HepG2 (cell line): ENCODE measurements at regions of chr10 and their contacts with region 1.

Region 1: DNA sequence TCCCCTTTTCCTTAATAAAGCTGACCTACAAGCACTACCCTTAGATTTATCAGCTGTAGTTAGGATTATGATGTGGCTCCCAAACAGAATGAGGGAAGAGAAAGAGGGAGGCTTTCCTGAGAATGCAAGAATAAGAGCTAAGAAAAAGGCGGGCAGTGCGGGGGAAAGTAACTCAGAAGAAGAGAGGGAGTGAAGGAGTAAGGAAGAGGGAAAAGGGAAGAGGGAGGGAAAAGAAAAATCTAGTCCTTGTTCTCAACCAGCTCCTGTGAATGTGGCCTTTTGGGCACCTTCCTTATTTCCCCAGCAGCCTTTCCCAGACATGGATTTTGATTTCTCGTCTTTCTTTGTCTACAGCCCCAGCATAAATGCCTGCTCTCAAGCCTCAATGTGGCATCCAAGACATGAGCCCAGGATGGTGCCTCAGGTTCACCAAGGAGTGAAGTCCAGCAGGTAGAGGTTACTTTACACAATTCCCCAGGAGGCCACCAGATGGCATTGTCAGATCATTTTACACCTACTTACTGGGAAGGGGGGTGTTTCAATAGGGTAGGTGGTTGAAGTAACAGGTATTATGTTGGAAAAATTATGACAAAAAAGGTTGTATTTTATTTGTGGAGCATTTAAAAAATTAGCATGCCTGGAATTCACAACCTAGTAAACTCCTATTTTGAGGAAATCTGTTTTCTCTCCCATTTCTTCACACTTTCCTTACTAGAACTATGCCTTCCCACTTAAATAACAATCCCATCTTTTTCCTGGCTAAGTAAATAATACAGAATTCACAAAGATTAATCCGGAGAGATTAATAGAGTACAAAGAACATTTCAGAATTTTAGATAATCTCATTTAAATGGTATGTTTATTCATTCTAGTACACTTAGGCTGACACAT is 106.5 kb downstream of the HTR7 start:
- DNase-seq: peak; percentile 49
- ATAC-seq: peak; percentile 96
- H3K4me3 ChIP-seq: no peak overlapping the region
- H3K27ac ChIP-seq: no peak overlapping the region
- H3K4me1 ChIP-seq: no peaks in the 10 kb centered on the region
- H3K27me3 ChIP-seq: no peaks in the 10 kb centered on the region; a peak in 1 of 5 replicates
- CTCF ChIP-seq: peak; percentile 83
- EP300 ChIP-seq: no peak
- POLR2A ChIP-seq: no peak
- RAD21 ChIP-seq: peak; percentile 59

Region 2: DNA sequence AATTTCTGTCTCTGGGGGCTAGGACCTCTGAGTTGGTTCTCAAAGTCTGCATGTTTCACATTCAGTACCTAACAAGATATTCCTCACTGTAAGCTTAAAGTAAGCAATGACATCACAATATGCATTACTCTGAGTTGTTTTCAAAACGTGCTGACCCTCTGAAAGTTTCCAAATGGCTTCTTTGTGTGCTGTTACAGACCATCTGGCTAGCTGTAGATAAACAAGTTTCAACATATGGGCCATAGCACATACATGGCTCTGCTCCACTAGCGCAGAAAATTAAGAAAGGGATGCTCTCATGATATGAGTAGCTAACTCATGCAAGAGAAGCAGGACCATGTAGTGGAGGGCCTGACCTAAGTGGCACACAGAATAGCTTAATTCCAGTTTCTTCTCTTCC is 12.5 kb before region 1 on chr10:
- CTCF ChIA-PET with region 1: no interaction called
- POLR2A ChIA-PET with region 1: no interaction called
- in situ Hi-C with region 1: no loop called
- intact Hi-C with region 1: no loop called
- DNase-seq: no peak
- ATAC-seq: no peak
- H3K4me3 ChIP-seq: no peak overlapping the region
- H3K27ac ChIP-seq: no peak overlapping the region
- H3K4me1 ChIP-seq: no peaks in the 10 kb centered on the region
- H3K27me3 ChIP-seq: no peaks in the 10 kb centered on the region
- CTCF ChIP-seq: no peak
- EP300 ChIP-seq: no peak
- POLR2A ChIP-seq: no peak
- RAD21 ChIP-seq: no peak

Region 3: DNA sequence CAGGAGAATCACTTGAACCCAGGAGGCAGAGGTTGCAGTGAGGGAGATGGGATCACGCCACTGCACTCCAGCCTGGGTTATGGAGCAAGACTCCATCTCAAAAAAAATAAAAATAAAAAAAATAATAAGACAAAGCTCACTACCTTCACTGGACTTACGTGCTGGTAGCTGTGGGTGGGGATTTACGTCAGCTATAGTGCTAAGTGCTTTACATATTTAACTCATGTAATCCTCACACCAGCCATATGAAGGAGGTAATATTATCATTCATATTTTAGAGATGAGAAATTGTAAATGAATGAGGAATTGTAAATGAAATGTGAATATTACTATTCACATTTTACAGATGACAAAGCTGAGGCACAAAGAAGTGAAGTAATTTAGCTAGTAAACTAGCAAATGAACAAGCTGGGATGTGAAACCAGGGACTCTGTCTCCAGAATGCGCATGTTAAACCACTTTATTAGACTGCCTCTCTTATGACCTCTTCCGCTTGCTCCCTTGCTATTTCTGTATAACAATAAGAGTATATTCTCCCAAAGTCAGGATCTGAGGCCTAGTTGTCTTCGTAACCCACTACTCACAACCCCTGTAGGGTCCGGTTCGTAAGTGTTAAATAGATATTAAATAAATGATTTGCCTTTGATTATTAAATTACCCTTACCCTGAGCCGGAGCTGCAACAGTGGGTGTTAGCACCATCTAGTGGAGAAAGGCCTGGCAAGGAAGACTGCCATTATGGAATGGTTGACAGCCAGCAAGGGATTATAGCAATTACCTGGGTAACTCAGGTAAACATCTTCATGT is 36.2 kb after region 1 on chr10:
- CTCF ChIA-PET with region 1: interaction called, 9 read pairs
- POLR2A ChIA-PET with region 1: no interaction called
- in situ Hi-C with region 1: no loop called
- intact Hi-C with region 1: loop called (anchors 1 kb)
- DNase-seq: peak; percentile 9
- ATAC-seq: peak; percentile 78
- H3K4me3 ChIP-seq: no peak overlapping the region
- H3K27ac ChIP-seq: no peak overlapping the region
- H3K4me1 ChIP-seq: no peaks in the 10 kb centered on the region
- H3K27me3 ChIP-seq: peaks cover 0 to 9% of the 10 kb centered on the region in 2 experiments; a peak in 3 of 5 replicates
- CTCF ChIP-seq: peak; percentile 65
- EP300 ChIP-seq: no peak
- POLR2A ChIP-seq: no peak
- RAD21 ChIP-seq: no peak

Region 4: GRCh38 chr10:90862908-90863514 is 111.7 kb after region 1 on chr10:
- CTCF ChIA-PET with region 1: interaction called, 24 read pairs
- POLR2A ChIA-PET with region 1: no interaction called
- in situ Hi-C with region 1: loop called (anchors 5 kb)
- intact Hi-C with region 1: loop called (anchors 1 kb)
- DNase-seq: peak; percentile 16
- ATAC-seq: no peak
- H3K4me3 ChIP-seq: no peak overlapping the region
- H3K27ac ChIP-seq: no peak overlapping the region
- H3K4me1 ChIP-seq: peaks cover 6% of the 10 kb centered on the region; the same call in 1 of the 2 replicates
- H3K27me3 ChIP-seq: peaks cover 2 to 29% of the 10 kb centered on the region in 2 experiments; a peak in 3 of 5 replicates
- CTCF ChIP-seq: peak; percentile 48
- EP300 ChIP-seq: no peak
- POLR2A ChIP-seq: no peak
- RAD21 ChIP-seq: no peak; the same call in 1 of the 2 replicates

Region 5: GRCh38 chr10:90871766-90872647 is 120.7 kb after region 1 on chr10 and contains the start of gene RPP30:
- CTCF ChIA-PET with region 1: interaction called, 5 read pairs
- POLR2A ChIA-PET with region 1: no interaction called
- in situ Hi-C with region 1: loop called (anchors 5 kb)
- intact Hi-C with region 1: loop called (anchors 2 kb)
- DNase-seq: peak; percentile 75
- ATAC-seq: peak; percentile 100
- H3K4me3 ChIP-seq: peak within 1 kb of the TSS; percentile 86 to 93 (median 86)
- H3K27ac ChIP-seq: peak within 1 kb of the TSS; percentile 64
- H3K4me1 ChIP-seq: peaks cover 28% of the 10 kb centered on the region
- H3K27me3 ChIP-seq: no peaks in the 10 kb centered on the region; a peak in 1 of 5 replicates
- CTCF ChIP-seq: no peak
- EP300 ChIP-seq: no peak
- POLR2A ChIP-seq: peak; percentile 71 to 79
- RAD21 ChIP-seq: no peak
- total RNA-seq, gene RPP30: 65.0 and 91.5 TPM in 2 replicates